PC-9 (cell line): ENCODE measurements at regions of chr19 and their contacts with region 1.

Region 1: DNA sequence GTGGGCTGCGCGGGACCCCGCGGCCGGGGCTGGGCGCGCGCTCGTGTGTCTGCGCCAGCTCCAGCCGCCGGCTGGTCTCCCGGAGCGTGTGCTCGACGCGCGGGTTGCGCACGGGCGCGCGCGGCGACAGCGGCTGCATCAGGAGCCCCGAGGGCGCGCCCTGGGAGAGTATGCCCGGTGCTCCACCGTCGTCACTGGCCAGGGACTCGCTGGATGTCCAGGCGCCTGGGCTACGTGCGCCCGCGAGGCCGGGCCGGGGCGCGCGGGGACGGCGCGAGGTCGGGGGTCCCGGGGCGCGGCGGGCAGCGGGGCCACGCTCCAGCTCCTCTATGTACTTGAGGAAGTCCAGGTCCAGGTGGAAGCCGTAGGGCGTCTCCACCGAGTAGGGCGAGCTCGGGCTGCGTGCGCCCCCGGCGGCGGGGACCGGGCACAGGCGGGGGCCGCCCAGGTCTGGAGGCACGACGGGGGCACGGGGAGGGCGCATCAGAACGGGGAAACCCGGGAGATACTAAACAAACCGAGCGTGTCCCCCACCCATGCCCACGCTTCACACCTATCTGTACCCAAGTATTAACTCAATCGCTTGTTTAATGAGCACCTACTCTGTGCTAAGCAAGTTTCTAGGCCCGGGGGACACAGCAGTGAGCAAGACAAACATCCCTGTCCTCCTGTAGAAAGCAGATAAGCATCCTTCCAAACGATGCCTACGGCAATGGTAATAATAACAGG is 7.6 kb downstream of the KANK3 start:
- DNase-seq: peak; percentile 46 to 68
- H3K4me3 ChIP-seq: peak overlapping the region; percentile 66; the same call in 1 of the 2 replicates
- H3K27ac ChIP-seq: 0 out of 2 replicates have a peak overlapping the region, but pooled peaks have one; percentile 28
- H3K4me1 ChIP-seq: no peaks in the 10 kb centered on the region
- H3K27me3 ChIP-seq: no peaks in the 10 kb centered on the region
- CTCF ChIP-seq: peak; percentile 58; the same call in 1 of the 2 replicates

Region 2: GRCh38 chr19:8148410-8149231 is 186.9 kb before region 1 on chr19:
- CTCF ChIA-PET with region 1: no interaction called
- POLR2A ChIA-PET with region 1: no interaction called
- intact Hi-C with region 1: no loop called
- DNase-seq: no peak
- H3K4me3 ChIP-seq: peak overlapping the region; percentile 38; the same call in 1 of the 2 replicates
- H3K27ac ChIP-seq: no peak overlapping the region
- H3K4me1 ChIP-seq: peaks cover 21% of the 10 kb centered on the region
- H3K27me3 ChIP-seq: peaks cover 64% of the 10 kb centered on the region
- CTCF ChIP-seq: no peak

Region 3: DNA sequence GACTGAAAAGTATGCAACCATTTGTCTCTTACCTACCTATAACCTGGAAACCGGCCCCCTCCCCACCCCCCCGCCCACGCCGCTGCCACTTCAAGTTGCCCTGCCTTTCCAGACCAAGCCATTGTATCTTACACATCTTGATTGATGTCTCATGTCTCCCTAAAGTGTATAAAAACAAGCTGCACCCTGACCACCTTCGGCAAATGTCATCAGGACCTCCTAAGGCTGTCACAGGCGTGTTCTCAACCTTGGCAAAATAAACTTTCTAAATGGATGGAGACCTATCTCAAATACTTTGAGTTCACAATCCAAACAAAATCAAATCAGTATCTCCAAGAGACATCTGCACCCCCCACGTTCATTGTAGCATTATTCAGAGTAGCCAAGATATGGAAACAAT is 668.6 kb after region 1 on chr19:
- CTCF ChIA-PET with region 1: interaction called, 16 read pairs
- POLR2A ChIA-PET with region 1: no interaction called
- intact Hi-C with region 1: no loop called
- DNase-seq: no peak
- H3K4me3 ChIP-seq: no peak overlapping the region
- H3K27ac ChIP-seq: no peak overlapping the region
- H3K4me1 ChIP-seq: peaks cover 23% of the 10 kb centered on the region
- H3K27me3 ChIP-seq: no peaks in the 10 kb centered on the region
- CTCF ChIP-seq: no peak